ENCODE measurements at regions of chr9 and their contacts with region 1.

Region 1: DNA sequence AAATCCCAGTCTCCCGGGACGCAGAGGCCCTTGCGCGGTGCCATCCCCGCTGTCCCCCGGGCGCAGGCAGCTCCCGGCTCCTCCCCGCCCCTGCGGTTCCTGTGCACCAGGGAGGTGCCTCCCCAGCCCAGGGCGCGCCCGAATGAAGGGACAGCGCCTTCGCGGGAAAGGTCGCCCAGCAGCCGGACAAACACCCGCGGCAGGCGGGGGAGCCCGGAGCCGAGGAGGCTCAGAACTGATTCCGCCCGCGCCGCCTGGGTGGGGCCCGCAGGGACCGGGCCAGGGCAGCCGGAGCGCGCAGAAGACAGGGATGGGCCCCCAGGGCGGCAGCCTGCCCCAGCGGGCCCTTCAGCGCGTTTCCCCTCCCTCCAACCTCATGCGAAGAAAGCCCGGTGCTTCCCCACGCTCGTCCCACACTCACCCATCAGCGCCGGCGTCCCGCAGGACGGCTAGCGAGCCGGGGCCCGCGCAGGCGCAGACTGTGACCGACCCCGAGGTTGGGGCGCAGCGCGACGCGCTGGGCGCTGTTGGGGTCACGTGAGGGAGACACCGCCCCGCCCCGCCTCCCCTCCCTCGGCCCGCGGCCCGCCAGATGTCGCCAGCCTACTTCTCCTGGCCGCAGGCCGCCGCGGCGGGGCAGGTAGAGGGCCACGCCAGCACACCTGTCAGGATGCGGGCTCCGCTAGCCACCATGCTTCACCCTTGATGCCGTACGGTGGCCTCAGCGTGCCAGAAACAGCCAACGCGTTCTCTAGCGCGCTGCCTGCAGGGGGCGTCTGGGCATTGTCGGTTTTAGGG is at the start of gene SLC25A51:
- DNase-seq: peak; percentile 80 to 91
- ATAC-seq: peak; percentile 92 to 95
- H3K4me3 ChIP-seq: peak within 1 kb of the TSS; percentile 75 to 93 (median 85)
- H3K27ac ChIP-seq: peak within 1 kb of the TSS; percentile 86 to 90 (median 88)
- H3K4me1 ChIP-seq: peaks cover 16 to 17% of the 10 kb centered on the region in 2 donors
- H3K27me3 ChIP-seq: no peaks in the 10 kb centered on the region
- CTCF ChIP-seq: peak; percentile 90 to 97 (median 96)
- POLR2A ChIP-seq: peak; percentile 74 to 81
- total RNA-seq, gene SLC25A51: 16.0 to 30.7 (median 22.2) TPM

Region 2: DNA sequence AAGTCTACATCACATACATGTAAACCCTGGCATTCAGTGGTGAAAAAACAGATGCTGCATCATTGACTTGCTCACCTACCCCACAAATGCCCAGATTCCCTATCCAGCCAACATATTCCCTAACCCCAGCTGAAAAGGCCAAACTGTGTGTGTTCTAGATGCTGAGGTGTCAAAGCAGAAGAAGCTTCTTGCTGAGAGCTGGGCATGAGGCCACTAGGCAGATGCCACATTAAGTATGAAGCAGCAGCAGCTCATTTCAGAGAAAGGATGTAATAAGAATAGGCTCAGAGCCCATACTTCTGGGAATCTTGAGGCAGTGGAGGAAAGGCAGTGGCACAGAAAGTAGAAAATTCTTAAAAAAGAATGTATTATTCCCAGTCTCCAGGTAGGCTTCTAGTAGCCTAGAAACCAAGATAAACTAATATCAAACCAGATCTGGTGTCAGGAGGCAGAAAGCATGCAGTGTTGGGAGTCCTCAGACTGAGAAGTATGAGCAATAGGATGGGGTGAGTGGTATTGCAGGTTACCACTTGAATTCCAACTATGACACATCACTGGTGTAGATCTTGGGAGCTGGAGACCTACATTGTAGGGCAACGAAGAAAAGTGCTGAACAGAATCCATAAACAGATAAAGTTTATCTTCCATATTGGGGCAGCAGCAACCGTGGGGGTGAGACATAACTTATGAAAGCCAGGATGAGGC is 553.2 kb before region 1 on chr9:
- in situ Hi-C with region 1: no loop called
- intact Hi-C with region 1: no loop called
- DNase-seq: no peak
- ATAC-seq: no peak
- H3K4me3 ChIP-seq: no peak overlapping the region
- H3K27ac ChIP-seq: no peak overlapping the region
- H3K4me1 ChIP-seq: no peaks in the 10 kb centered on the region
- H3K27me3 ChIP-seq: no peaks in the 10 kb centered on the region
- CTCF ChIP-seq: no peak
- POLR2A ChIP-seq: no peak

Region 3: DNA sequence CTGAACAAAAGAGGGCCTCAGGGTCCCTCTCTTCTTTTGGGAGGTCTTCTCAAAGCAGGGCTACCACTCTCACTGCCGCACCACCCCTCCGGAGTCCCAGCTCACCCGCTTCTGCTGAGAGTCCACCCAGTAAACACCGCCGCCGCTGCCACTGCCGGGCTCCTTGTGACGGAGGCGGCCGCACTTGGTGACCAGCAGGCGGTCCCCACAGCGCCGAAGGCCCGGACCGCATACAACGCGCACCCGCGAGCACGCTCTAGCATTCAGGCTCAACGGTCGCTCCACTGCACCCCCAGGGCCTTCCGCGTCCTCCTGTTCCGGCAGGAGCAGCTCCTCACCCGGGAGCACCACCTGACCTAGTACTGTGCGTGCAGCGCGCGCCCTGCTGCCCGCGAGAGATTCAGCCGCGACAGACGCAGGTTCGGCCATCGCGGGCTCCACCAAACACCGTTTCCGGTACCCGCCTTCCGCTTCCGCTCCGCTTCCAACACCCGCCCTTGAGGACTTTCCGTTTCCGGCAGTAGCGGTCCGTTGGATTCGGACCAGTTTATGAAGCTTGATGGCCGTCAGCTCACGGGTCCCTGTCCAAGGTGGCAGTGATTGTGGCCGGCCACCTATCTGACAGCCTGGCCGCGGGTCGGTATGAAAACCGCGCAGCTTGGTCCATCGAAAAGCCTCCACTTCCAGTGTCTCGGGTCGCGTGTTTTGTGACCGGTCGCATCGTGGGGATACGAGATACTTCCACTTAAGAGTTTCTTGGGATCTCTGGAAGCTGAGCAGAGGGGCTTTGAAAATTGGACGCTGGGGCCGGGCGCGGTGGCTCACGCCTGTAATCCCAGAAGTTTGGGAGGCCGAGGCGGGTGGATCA is 119.0 kb before region 1 on chr9 and contains the start of gene EXOSC3:
- in situ Hi-C with region 1: loop called in 2 of 4 experiments (anchors 10 to 25 kb)
- intact Hi-C with region 1: no loop called
- DNase-seq: peak; percentile 84 to 85
- ATAC-seq: peak; percentile 99
- H3K4me3 ChIP-seq: peak within 1 kb of the TSS; percentile 87 to 95 (median 94)
- H3K27ac ChIP-seq: peak within 1 kb of the TSS; percentile 77 to 89 (median 81)
- H3K4me1 ChIP-seq: peaks cover 15% of the 10 kb centered on the region in 2 donors
- H3K27me3 ChIP-seq: peaks cover 0 to 11% (median 0%) of the 10 kb centered on the region in 3 donors
- CTCF ChIP-seq: peak in 1 of 5 experiments; percentile 15
- POLR2A ChIP-seq: peak; percentile 13 to 63
- total RNA-seq, gene EXOSC3: 15.6 to 46.7 (median 17.8) TPM

Region 4: DNA sequence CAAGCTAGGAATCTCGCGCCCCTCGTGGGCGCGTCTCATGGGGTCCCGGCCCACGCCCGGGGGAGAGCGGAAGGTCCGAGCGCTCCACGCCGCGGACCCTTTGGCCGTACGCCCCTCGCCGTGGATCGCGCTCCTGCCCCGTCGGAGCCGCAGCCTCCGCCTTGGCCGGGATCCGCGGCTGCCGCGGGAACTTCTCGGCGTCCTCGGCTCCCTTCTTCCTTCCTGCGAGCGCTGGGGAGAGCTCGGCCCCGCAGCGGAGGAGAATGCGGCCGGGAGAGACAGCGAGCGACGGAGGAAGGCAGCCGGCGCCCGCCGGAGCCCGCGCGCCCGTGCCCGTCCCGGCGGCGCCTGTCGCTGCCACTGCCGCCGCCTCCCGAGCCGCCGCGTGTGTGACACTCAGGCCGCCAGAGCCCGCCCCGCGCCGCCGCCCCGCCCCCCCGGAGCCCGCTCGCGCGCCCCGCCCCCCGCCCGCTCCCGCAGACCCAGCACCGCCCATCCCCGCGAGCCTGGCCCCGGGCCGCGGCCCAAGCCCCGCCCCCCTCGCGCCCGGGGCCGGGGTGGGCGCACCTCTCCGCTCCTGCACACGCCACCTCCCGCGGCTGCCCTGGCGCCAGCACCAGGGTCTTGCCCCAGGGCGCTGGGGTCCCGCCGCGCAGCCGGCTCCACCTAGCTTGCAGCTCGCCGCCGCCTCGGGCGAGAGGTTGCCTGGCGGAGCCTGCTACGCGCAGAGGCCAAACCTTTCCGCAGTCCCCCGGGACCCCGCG is 165.2 kb after region 1 on chr9 and contains the start of gene SHB:
- in situ Hi-C with region 1: loop called in 1 of 4 experiments (anchors 10 kb)
- intact Hi-C with region 1: loop called (anchors 2 kb)
- DNase-seq: peak; percentile 70 to 76
- ATAC-seq: peak; percentile 71 to 72
- H3K4me3 ChIP-seq: peak within 1 kb of the TSS; percentile 85 to 99 (median 92)
- H3K27ac ChIP-seq: peak within 1 kb of the TSS; percentile 89 to 97 (median 94)
- H3K4me1 ChIP-seq: peaks cover 11 to 21% of the 10 kb centered on the region in 2 donors
- H3K27me3 ChIP-seq: no peaks in the 10 kb centered on the region
- CTCF ChIP-seq: peak in 4 of 5 experiments; percentile 29 to 47 (median 37)
- POLR2A ChIP-seq: peak; percentile 88 to 91
- total RNA-seq, gene SHB: 1.2 to 6.1 (median 4.6) TPM

Region 5: DNA sequence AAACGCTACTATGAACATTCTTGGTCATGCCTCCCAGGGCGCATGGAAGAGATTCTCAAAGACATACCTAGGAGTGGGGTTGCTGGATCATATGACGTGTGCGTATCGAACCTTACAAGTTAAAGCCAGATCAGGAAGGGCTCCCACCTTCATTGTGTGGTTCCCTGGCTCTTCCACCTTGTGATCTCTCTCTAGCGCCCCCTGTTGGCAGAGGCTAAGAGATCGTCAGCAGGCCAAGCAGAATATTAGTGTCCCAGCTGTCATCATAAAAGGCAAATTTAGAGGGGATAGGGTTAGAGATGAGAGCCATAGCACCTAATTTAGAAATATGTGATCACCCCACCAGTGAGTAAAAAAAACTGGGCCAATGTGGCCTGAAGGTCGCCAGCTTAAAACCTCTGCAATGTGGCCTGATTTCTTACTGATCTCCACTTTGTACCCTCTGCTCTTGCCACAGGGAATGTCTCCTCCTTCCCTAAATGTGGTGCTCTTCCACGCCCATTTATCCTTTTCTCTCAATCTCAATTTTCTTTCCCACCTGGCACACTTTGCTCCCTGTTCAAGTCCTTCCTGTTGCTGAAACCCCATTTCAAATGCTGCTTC is 256.9 kb after region 1 on chr9:
- in situ Hi-C with region 1: loop called in 1 of 4 experiments (anchors 5 kb)
- intact Hi-C with region 1: no loop called
- DNase-seq: peak; percentile 19 to 35
- ATAC-seq: peak; percentile 66 to 80
- H3K4me3 ChIP-seq: no peak overlapping the region
- H3K27ac ChIP-seq: no peak overlapping the region
- H3K4me1 ChIP-seq: peaks cover 0 to 3% of the 10 kb centered on the region in 2 donors
- H3K27me3 ChIP-seq: no peaks in the 10 kb centered on the region
- CTCF ChIP-seq: peak; percentile 48 to 86 (median 71)
- POLR2A ChIP-seq: no peak

Region 6: DNA sequence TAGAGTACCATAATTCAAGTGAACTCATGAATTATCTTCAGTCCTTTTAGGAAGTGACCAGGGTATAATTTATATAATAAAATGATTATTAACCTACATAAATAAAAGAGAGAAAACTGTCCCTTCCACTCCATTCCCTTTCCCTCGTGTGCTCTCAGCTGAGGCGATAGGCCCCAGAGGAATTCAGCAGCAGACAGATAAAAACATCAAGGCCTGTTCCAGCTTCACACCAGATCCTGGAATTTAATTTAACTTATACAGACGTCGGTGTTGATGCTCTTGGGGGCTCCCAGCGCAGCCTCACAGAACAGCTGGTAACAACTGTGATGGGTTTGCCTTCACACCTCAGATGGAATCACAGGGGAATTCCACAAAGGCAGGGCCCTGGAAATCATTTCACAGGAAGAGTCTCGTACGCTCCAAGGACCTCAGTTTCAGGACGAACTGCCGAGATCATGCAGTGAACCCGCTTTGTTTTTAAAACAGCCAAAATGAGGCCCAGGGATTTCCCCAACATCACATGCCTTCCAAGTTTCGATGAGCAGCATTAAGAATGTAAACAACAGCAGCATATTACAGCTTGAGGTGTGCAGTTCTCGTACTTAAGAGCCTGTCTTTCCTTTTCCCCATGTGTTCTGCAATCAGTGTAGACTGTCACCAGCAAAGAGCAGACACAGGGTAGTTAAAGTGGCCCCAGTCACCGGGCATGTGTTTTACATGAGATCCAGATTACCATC is 415.1 kb after region 1 on chr9:
- in situ Hi-C with region 1: no loop called
- intact Hi-C with region 1: no loop called
- DNase-seq: no peak
- ATAC-seq: no peak
- H3K4me3 ChIP-seq: peak overlapping the region in 1 of 4 donors; percentile 1
- H3K27ac ChIP-seq: no peak overlapping the region
- H3K4me1 ChIP-seq: no peaks in the 10 kb centered on the region
- H3K27me3 ChIP-seq: peaks cover 0 to 5% (median 0%) of the 10 kb centered on the region in 3 donors
- CTCF ChIP-seq: no peak
- POLR2A ChIP-seq: no peak

Region 7: DNA sequence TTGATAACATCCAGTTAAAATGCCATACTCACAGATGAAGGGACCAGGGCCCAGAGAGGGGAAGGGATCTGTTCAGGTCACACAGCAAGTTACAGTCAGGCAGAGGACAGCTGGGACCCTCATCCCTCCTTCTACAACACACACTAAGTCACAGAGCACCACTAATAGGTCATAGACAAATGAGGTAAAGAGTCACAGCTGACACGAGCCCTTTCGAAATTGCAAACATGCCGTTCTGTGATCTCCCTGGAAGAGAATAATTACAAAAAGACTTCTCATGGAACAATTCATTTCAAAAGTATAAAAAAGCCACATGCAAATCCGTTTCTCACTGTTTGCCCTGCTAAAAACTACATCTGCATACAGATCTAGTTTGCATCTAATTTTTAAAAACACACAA is 504.9 kb after region 1 on chr9:
- in situ Hi-C with region 1: loop called in 1 of 4 experiments (anchors 5 kb)
- intact Hi-C with region 1: no loop called
- DNase-seq: no peak
- ATAC-seq: no peak
- H3K4me3 ChIP-seq: no peak overlapping the region
- H3K27ac ChIP-seq: no peak overlapping the region
- H3K4me1 ChIP-seq: no peaks in the 10 kb centered on the region
- H3K27me3 ChIP-seq: peaks cover 8 to 16% (median 10%) of the 10 kb centered on the region in 3 donors
- CTCF ChIP-seq: no peak
- POLR2A ChIP-seq: no peak